A549 (cell line): ENCODE measurements at regions of chr5 and their contacts with region 1.

Region 1: GRCh38 chr5:175873088-175873454 is 1.7 kb downstream of the CPLX2 start:
- DNase-seq: peak; percentile 73 to 84
- ATAC-seq: peak; percentile 31 to 67
- H3K4me3 ChIP-seq: peak overlapping the region; percentile 82
- H3K27ac ChIP-seq: peak overlapping the region; percentile 97 to 99
- H3K4me1 ChIP-seq: peaks cover 77% of the 10 kb centered on the region
- CTCF ChIP-seq: peak; percentile 55
- EP300 ChIP-seq: no peak
- POLR2A ChIP-seq: no peak
- RAD21 ChIP-seq: peak; percentile 65 to 72

Region 2: GRCh38 chr5:175796536-175797499 is 76.3 kb before region 1 on chr5:
- CTCF ChIA-PET with region 1: interaction called, 41 read pairs
- POLR2A ChIA-PET with region 1: interaction called, 4 read pairs
- DNase-seq: peak; percentile 66 to 74
- ATAC-seq: peak; percentile 94 to 97
- H3K4me3 ChIP-seq: peak overlapping the region; percentile 53
- H3K27ac ChIP-seq: peak overlapping the region; percentile 65 to 80
- H3K4me1 ChIP-seq: peaks cover 38% of the 10 kb centered on the region
- CTCF ChIP-seq: no peak; the same call in 2 of the 3 replicates
- EP300 ChIP-seq: no peak
- POLR2A ChIP-seq: no peak
- RAD21 ChIP-seq: peak; percentile 8 to 54; a peak in 4 of 5 replicates

Region 3: GRCh38 chr5:175840050-175840841 is 32.8 kb before region 1 on chr5:
- CTCF ChIA-PET with region 1: interaction called, 12 read pairs
- POLR2A ChIA-PET with region 1: interaction called, 5 read pairs
- DNase-seq: peak in 1 of 2 experiments; percentile 64
- ATAC-seq: no peak
- H3K4me3 ChIP-seq: no peak overlapping the region
- H3K27ac ChIP-seq: peak overlapping the region; percentile 97 to 99
- H3K4me1 ChIP-seq: peaks cover 64% of the 10 kb centered on the region
- CTCF ChIP-seq: peak; percentile 43; the same call in 2 of the 3 replicates
- EP300 ChIP-seq: no peak
- POLR2A ChIP-seq: no peak
- RAD21 ChIP-seq: peak; percentile 21 to 40; a peak in 1 of 5 replicates

Region 4: GRCh38 chr5:175853573-175854230 is 19.4 kb before region 1 on chr5:
- CTCF ChIA-PET with region 1: interaction called, 38 read pairs
- POLR2A ChIA-PET with region 1: interaction called, 7 read pairs
- DNase-seq: peak in 1 of 2 experiments; percentile 82
- ATAC-seq: peak; percentile 52; a peak in 5 of 6 replicates
- H3K4me3 ChIP-seq: no peak overlapping the region
- H3K27ac ChIP-seq: peak overlapping the region; percentile 97 to 99
- H3K4me1 ChIP-seq: peaks cover 85% of the 10 kb centered on the region
- CTCF ChIP-seq: no peak
- EP300 ChIP-seq: peak; percentile 43 to 47; a peak in 3 of 5 replicates
- POLR2A ChIP-seq: no peak
- RAD21 ChIP-seq: no peak

Region 5: GRCh38 chr5:175885813-175886212 is 12.7 kb after region 1 on chr5:
- CTCF ChIA-PET with region 1: interaction called, 16 read pairs
- POLR2A ChIA-PET with region 1: no interaction called
- DNase-seq: no peak
- ATAC-seq: peak in 1 of 2 experiments; percentile 2; a peak in 2 of 6 replicates
- H3K4me3 ChIP-seq: no peak overlapping the region
- H3K27ac ChIP-seq: peak overlapping the region; percentile 46 to 82; a peak in 5 of 6 replicates
- H3K4me1 ChIP-seq: peaks cover 75% of the 10 kb centered on the region
- CTCF ChIP-seq: no peak
- EP300 ChIP-seq: no peak
- POLR2A ChIP-seq: no peak
- RAD21 ChIP-seq: no peak

Region 6: DNA sequence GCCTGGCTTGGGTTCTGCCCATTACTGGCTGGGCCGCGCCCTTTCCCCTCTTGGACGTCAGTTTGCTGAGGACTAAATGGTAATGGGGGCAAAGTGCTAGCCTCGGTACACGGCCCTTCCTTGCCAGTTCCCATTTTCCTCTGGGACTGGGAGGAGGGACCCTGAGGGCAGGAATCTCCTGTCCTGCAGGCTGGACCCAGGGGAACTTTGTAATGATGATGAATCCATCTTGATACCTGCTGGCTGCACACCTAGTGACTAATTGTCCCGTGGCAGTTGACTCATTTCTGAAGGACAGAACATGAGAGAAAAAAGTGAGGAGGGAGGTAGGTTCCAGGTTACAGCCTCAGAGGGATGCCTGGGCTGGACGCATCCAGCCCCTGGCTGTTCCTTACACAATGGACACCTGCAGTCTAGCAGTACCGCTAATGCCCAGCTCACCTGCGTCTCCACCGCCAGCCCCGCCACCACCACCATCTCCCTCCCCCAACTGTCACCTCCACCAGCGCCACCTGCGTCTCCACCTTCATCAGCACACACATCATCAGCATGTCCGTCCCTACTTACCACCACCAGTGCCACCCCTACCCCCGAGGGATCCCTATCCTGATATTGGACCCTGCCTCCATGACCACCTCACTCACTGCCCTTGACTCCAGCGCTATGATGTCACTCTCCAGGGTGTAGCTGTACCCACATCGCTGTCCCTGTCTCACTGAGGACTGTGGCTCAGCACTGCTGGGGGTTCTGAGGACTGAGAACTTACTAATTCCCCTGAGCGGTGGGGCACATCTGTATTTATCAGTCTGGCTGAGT is 680.4 kb after region 1 on chr5:
- CTCF ChIA-PET with region 1: no interaction called
- POLR2A ChIA-PET with region 1: no interaction called
- DNase-seq: peak in 1 of 2 experiments; percentile 48
- ATAC-seq: peak; percentile 39 to 50
- H3K4me3 ChIP-seq: no peak overlapping the region
- H3K27ac ChIP-seq: peak overlapping the region; percentile 51 to 52; a peak in 5 of 6 replicates
- H3K4me1 ChIP-seq: peaks cover 21% of the 10 kb centered on the region; the same call in 2 of the 3 replicates
- CTCF ChIP-seq: no peak
- EP300 ChIP-seq: no peak
- POLR2A ChIP-seq: no peak
- RAD21 ChIP-seq: no peak